ENCODE measurements at regions of chr2 and their contacts with region 1.

Region 1: GRCh38 chr2:174697255-174697654 is 67.0 kb downstream of the CHRNA1 start:
- DNase-seq: peak in 1 of 2 experiments; percentile 70
- H3K4me3 ChIP-seq: no peak overlapping the region
- H3K27ac ChIP-seq: no peak overlapping the region
- H3K4me1 ChIP-seq: peaks cover 0 to 5% (median 1%) of the 10 kb centered on the region in 4 experiments; a peak in 3 of 7 replicates
- H3K27me3 ChIP-seq: no peaks in the 10 kb centered on the region
- CTCF ChIP-seq: peak; percentile 96 to 98 (median 96)
- EP300 ChIP-seq: no peak
- POLR2A ChIP-seq: no peak
- RAD21 ChIP-seq: peak; percentile 90 to 92

Region 2: DNA sequence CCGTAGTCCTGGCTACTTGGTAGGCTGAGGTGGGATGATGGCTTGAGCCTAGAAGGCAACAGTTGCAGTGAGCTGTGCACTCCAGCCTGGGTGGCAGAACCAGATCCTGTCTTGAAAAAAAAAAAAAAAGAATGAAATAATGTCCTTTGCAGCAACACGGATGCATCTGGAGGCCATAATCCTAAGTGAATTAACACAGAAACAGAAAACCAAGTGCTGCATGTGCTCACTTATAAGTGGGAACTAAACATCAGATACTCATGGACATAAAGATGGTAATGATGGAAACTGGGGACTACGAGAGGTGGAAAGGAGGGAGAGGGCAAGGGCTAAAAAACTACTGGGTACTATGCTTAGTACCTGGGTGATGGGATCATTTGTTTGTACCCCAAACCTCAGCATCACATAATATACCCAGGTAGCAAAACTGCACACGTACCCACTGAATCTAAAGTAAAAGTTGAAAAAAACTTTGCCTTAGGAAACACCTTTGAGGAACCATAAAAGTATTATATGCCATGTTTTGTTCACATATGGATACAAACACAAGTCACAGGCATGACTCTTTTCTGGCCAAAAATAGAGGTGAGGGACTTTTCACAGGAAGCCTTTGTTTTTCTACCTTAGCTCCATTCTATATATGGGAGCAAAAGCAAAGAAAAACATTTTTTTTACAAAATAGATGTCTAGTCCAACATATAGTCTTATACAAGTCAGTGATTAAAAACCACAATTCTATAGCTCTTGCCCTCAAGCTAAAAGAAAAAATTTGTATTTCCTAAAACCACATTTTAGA is 247.0 kb before region 1 on chr2:
- CTCF ChIA-PET with region 1: no interaction called
- POLR2A ChIA-PET with region 1: no interaction called
- DNase-seq: no peak
- H3K4me3 ChIP-seq: no peak overlapping the region
- H3K27ac ChIP-seq: no peak overlapping the region
- H3K4me1 ChIP-seq: peaks cover 0 to 1% (median 0%) of the 10 kb centered on the region in 4 experiments; a peak in 1 of 7 replicates
- H3K27me3 ChIP-seq: no peaks in the 10 kb centered on the region
- CTCF ChIP-seq: no peak
- EP300 ChIP-seq: no peak
- POLR2A ChIP-seq: no peak
- RAD21 ChIP-seq: no peak

Region 3: GRCh38 chr2:174577967-174578589 is 119.2 kb before region 1 on chr2:
- CTCF ChIA-PET with region 1: interaction called, 27 read pairs
- POLR2A ChIA-PET with region 1: no interaction called
- DNase-seq: no peak
- H3K4me3 ChIP-seq: no peak overlapping the region
- H3K27ac ChIP-seq: no peak overlapping the region
- H3K4me1 ChIP-seq: no peaks in the 10 kb centered on the region
- H3K27me3 ChIP-seq: no peaks in the 10 kb centered on the region
- CTCF ChIP-seq: peak; percentile 27 to 65 (median 57)
- EP300 ChIP-seq: no peak
- POLR2A ChIP-seq: no peak
- RAD21 ChIP-seq: peak; percentile 81 to 83

Region 4: GRCh38 chr2:174682578-174683391 is 14.5 kb before region 1 on chr2:
- CTCF ChIA-PET with region 1: interaction called, 170 read pairs
- POLR2A ChIA-PET with region 1: interaction called, 3 read pairs
- DNase-seq: peak in 1 of 2 experiments; percentile 81
- H3K4me3 ChIP-seq: peak overlapping the region; percentile 58 to 76 (median 63)
- H3K27ac ChIP-seq: no peak overlapping the region
- H3K4me1 ChIP-seq: peaks cover 2 to 6% (median 2%) of the 10 kb centered on the region in 4 experiments; a peak in 5 of 7 replicates
- H3K27me3 ChIP-seq: peaks cover 5 to 29% (median 23%) of the 10 kb centered on the region in 4 experiments
- CTCF ChIP-seq: no peak
- EP300 ChIP-seq: no peak
- POLR2A ChIP-seq: no peak
- RAD21 ChIP-seq: no peak

Region 5: DNA sequence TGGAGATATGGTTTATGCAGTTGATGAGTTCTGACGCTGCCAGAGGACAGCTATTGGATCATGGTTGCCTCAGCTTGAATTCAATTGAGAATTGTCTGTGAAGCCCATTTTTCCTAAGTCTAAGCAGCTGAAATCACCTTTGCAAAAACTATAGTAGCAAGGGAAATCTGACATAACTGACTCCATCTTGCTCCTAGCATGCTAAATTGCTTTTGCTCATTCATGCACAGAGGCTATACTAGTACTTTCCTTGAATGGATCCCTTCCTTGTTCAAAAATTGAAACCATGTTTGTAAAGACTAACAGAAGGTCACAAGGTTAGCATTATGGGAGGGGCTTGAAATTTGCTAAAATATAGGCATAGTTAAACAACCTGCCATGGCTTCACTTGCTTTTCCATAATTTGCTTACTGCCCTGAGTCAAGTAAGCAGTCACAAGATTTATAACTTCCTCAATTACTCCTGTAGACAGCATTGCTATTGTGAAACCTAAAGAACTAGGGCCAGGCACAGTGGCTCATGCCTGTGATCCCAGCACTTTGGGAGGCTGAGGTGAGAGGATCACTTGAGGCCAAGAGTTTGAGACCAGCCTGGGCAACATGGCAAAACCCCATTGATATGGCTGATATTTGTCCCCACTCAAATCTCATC is 25.8 kb after region 1 on chr2:
- CTCF ChIA-PET with region 1: interaction called, 173 read pairs
- POLR2A ChIA-PET with region 1: interaction called, 3 read pairs
- DNase-seq: no peak
- H3K4me3 ChIP-seq: no peak overlapping the region
- H3K27ac ChIP-seq: no peak overlapping the region
- H3K4me1 ChIP-seq: no peaks in the 10 kb centered on the region; a peak in 1 of 7 replicates
- H3K27me3 ChIP-seq: no peaks in the 10 kb centered on the region
- CTCF ChIP-seq: no peak
- EP300 ChIP-seq: no peak
- POLR2A ChIP-seq: no peak
- RAD21 ChIP-seq: no peak

Region 6: GRCh38 chr2:174748948-174749347 is 51.7 kb after region 1 on chr2:
- CTCF ChIA-PET with region 1: interaction called, 19 read pairs
- POLR2A ChIA-PET with region 1: interaction called, 3 read pairs
- DNase-seq: peak; percentile 66 to 89
- H3K4me3 ChIP-seq: no peak overlapping the region; a peak in 1 of 8 replicates
- H3K27ac ChIP-seq: no peak overlapping the region
- H3K4me1 ChIP-seq: peaks cover 0 to 2% (median 1%) of the 10 kb centered on the region in 4 experiments; a peak in 3 of 7 replicates
- H3K27me3 ChIP-seq: no peaks in the 10 kb centered on the region
- CTCF ChIP-seq: peak; percentile 67 to 89 (median 82)
- EP300 ChIP-seq: no peak
- POLR2A ChIP-seq: no peak
- RAD21 ChIP-seq: peak; percentile 96 to 97

Region 7: DNA sequence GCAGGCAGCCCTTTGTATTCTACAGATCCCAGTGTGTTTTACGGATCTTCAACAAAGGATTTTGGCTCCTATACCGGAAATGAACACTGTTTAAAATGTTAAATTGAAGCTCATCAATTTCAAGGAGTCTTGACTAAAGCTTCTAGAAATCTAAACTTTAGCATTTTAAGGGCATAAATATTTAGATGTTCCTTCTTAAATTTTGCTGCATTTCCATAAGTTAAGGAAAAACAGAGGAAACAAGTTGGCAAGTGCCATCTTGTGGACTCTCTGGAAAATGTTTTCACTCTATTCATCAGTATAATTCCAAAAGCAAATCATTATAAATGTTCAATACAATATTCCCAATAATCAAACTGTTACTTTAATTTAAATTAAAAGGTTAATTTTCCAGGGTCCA is 288.4 kb after region 1 on chr2:
- CTCF ChIA-PET with region 1: interaction called, 48 read pairs
- POLR2A ChIA-PET with region 1: no interaction called
- DNase-seq: no peak
- H3K4me3 ChIP-seq: no peak overlapping the region
- H3K27ac ChIP-seq: no peak overlapping the region
- H3K4me1 ChIP-seq: no peaks in the 10 kb centered on the region; a peak in 2 of 7 replicates
- H3K27me3 ChIP-seq: no peaks in the 10 kb centered on the region
- CTCF ChIP-seq: peak in 2 of 3 experiments; percentile 37 to 40; a peak in 2 of 4 replicates
- EP300 ChIP-seq: no peak
- POLR2A ChIP-seq: no peak
- RAD21 ChIP-seq: peak; percentile 54 to 68

Region 8: DNA sequence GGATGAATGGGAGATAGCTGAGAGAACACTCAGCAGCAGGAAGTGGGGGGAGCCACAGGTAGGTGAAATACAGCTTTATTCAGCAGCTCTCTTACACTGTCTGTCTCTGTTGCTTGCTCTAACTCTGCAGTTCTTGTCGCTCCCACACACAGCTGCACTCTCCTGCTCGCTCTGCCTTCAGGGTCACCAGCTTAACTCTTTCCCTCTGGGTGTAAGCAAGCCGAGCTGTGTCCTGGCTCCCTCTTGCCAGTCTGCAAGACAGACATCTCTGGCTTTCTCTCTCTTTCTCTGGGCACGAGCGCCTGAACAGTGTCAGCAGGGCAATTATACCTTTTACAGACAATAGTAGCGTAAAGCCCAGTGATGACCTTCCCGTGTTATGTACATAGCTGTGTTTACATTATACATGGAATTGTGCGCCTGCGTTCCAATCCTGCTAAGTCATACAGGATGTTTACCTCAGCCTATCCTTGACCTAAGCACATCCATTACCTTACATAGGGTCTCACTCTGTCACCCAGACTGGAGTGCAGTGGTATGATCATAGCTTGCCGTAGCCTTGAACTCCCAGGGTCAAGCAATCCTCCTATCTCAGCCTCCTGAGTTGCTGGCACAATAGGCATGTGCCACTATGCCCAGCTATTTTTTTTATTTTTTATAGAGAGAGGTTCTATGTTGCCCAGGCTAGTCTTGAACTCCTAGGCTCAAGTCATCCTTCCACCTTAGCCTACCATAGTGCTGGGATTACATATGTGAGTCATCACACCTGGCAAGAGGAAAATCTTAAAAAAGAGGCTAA is 365.7 kb after region 1 on chr2:
- CTCF ChIA-PET with region 1: interaction called, 11 read pairs
- POLR2A ChIA-PET with region 1: no interaction called
- DNase-seq: no peak
- H3K4me3 ChIP-seq: no peak overlapping the region
- H3K27ac ChIP-seq: no peak overlapping the region
- H3K4me1 ChIP-seq: peaks cover 0 to 5% (median under 1%) of the 10 kb centered on the region in 4 experiments; a peak in 4 of 7 replicates
- H3K27me3 ChIP-seq: no peaks in the 10 kb centered on the region
- CTCF ChIP-seq: no peak
- EP300 ChIP-seq: no peak
- POLR2A ChIP-seq: no peak
- RAD21 ChIP-seq: no peak